AG04450 (cell line): ENCODE measurements at regions of chr1 and their contacts with region 1.

Region 1: GRCh38 chr1:219990782-219991510 is 55.4 kb downstream of the EPRS1 start:
- DNase-seq: no peak
- H3K4me3 ChIP-seq: no peak overlapping the region
- H3K27ac ChIP-seq: no peak overlapping the region
- H3K27me3 ChIP-seq: no peaks in the 10 kb centered on the region
- CTCF ChIP-seq: peak; percentile 71

Region 2: GRCh38 chr1:220013497-220013896 is 22.6 kb after region 1 on chr1:
- CTCF ChIA-PET with region 1: interaction called, 26 read pairs
- POLR2A ChIA-PET with region 1: no interaction called
- DNase-seq: no peak
- H3K4me3 ChIP-seq: no peak overlapping the region
- H3K27ac ChIP-seq: no peak overlapping the region
- H3K27me3 ChIP-seq: no peaks in the 10 kb centered on the region
- CTCF ChIP-seq: no peak

Region 3: GRCh38 chr1:220028346-220028895 is 37.5 kb after region 1 on chr1:
- CTCF ChIA-PET with region 1: no interaction called
- POLR2A ChIA-PET with region 1: no interaction called
- DNase-seq: no peak
- H3K4me3 ChIP-seq: no peak overlapping the region
- H3K27ac ChIP-seq: no peak overlapping the region
- H3K27me3 ChIP-seq: no peaks in the 10 kb centered on the region
- CTCF ChIP-seq: no peak

Region 4: DNA sequence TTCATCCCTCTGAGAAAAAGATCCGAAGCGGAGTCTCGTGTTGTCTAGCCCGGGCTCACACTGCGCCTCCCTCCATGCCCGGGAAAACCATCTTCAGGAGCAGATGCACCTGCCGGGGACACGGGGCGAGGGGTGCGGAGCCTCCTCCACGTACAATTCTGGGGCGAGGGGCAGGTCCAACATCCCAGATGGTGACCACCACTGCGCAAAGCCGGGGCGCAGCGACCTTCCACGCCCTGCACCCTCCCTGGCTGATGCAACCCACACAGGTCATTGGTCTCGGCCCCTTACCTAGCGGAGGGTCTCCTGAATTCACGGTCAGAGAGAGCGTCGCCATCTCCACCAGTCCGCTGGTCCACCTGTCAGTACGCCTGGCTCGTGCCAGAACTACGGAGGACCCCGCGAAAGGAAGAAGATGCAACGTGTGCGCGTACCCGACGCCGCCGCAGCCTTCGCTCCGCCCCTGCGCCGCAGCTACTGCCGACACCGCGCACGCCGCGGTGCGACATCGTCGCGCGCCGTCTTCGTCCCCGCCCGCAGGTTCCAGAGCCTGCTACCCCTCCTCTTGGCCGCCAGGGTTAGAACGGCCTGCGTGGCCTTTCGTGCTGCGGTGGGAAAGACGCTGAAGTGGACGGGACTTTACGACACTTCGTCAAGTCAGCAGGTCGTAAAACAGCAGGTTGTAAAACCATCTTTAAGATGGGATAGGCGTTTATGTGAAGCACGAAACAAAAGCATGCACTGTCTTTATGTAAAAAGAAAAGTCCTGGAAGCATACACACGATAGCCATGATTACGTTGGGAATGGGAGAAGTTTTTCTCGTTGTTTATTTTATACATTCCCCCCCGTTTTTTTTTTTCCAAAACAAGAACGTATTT is 55.3 kb after region 1 on chr1 and contains the start of gene EPRS1:
- CTCF ChIA-PET with region 1: interaction called, 13 read pairs
- POLR2A ChIA-PET with region 1: no interaction called
- DNase-seq: peak; percentile 97
- H3K4me3 ChIP-seq: peak within 1 kb of the TSS; percentile 100
- H3K27ac ChIP-seq: peak within 1 kb of the TSS; percentile 91
- H3K27me3 ChIP-seq: no peaks in the 10 kb centered on the region
- CTCF ChIP-seq: peak; percentile 61
- polyA plus RNA-seq, gene EPRS1: 129 and 146 TPM in 2 replicates